Activated naive CD8-positive, alpha-beta T cell treated with anti-CD3 and anti-CD28 coated beads, Interleukin-2, amount 10 ng/mL, durations not matched to agents 7 days and 5 days (primary cell): ENCODE measurements at regions of chr2 and their contacts with region 1.

Region 1: GRCh38 chr2:8681786-8682692 is at the start of gene ID2:
- DNase-seq: peak; percentile 100
- ATAC-seq: peak; percentile 69
- H3K4me3 Mint-ChIP-seq: peak within 1 kb of the TSS; percentile 99
- H3K27ac Mint-ChIP-seq: peak within 1 kb of the TSS; percentile 98
- H3K4me1 Mint-ChIP-seq: peaks cover 34% of the 10 kb centered on the region
- H3K27me3 Mint-ChIP-seq: peaks cover 12% of the 10 kb centered on the region
- total RNA-seq, gene ID2: 167 to 172 TPM

Region 2: GRCh38 chr2:7427293-7428060 is 1254.6 kb before region 1 on chr2:
- POLR2A ChIA-PET with region 1: interaction called, 20 read pairs
- DNase-seq: no peak
- ATAC-seq: no peak
- H3K4me3 Mint-ChIP-seq: peak overlapping the region; percentile 34
- H3K27ac Mint-ChIP-seq: peak overlapping the region; percentile 70
- H3K4me1 Mint-ChIP-seq: peaks cover 40% of the 10 kb centered on the region
- H3K27me3 Mint-ChIP-seq: no peaks in the 10 kb centered on the region

Region 3: GRCh38 chr2:7725171-7725849 is 956.7 kb before region 1 on chr2:
- POLR2A ChIA-PET with region 1: interaction called, 98 read pairs
- DNase-seq: no peak
- ATAC-seq: peak; percentile 88
- H3K4me3 Mint-ChIP-seq: peak overlapping the region; percentile 95
- H3K27ac Mint-ChIP-seq: peak overlapping the region; percentile 92
- H3K4me1 Mint-ChIP-seq: peaks cover 40% of the 10 kb centered on the region
- H3K27me3 Mint-ChIP-seq: no peaks in the 10 kb centered on the region

Region 4: GRCh38 chr2:8337321-8337720 is 344.7 kb before region 1 on chr2:
- POLR2A ChIA-PET with region 1: interaction called, 11 read pairs
- DNase-seq: no peak
- ATAC-seq: peak; percentile 100
- H3K4me3 Mint-ChIP-seq: peak overlapping the region; percentile 67
- H3K27ac Mint-ChIP-seq: peak overlapping the region; percentile 81
- H3K4me1 Mint-ChIP-seq: peaks cover 16% of the 10 kb centered on the region
- H3K27me3 Mint-ChIP-seq: peaks cover 2% of the 10 kb centered on the region

Region 5: DNA sequence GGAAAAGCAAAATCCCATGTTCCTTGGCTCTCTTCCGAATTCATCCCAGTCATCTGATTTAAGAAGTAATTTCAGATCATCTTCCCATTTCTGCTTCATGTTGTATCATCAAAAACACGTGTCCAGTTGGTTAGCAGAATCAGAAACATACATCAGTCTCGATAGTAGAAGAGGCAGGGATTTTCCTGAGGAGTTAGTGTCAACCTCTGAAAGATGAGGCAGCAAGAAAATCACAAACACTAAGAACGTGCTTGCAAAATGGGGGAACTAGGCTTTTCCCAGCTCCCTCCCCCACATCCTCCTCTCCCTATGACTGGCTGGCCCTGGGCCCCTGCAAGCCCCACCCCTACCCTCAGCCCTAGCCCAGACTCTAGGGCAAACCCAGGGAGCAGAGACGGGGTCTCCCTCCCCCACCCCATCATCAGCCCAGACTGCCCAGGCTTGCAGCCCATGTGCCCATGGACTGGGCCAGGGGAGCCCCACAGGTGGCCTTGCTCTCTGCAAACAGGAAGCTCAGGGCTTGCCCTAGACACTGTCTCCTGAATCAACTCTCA is 161.2 kb before region 1 on chr2:
- POLR2A ChIA-PET with region 1: interaction called, 27 read pairs
- DNase-seq: no peak
- ATAC-seq: peak; percentile 32
- H3K4me3 Mint-ChIP-seq: no peak overlapping the region
- H3K27ac Mint-ChIP-seq: peak overlapping the region; percentile 19
- H3K4me1 Mint-ChIP-seq: peaks cover 71% of the 10 kb centered on the region
- H3K27me3 Mint-ChIP-seq: no peaks in the 10 kb centered on the region

Region 6: DNA sequence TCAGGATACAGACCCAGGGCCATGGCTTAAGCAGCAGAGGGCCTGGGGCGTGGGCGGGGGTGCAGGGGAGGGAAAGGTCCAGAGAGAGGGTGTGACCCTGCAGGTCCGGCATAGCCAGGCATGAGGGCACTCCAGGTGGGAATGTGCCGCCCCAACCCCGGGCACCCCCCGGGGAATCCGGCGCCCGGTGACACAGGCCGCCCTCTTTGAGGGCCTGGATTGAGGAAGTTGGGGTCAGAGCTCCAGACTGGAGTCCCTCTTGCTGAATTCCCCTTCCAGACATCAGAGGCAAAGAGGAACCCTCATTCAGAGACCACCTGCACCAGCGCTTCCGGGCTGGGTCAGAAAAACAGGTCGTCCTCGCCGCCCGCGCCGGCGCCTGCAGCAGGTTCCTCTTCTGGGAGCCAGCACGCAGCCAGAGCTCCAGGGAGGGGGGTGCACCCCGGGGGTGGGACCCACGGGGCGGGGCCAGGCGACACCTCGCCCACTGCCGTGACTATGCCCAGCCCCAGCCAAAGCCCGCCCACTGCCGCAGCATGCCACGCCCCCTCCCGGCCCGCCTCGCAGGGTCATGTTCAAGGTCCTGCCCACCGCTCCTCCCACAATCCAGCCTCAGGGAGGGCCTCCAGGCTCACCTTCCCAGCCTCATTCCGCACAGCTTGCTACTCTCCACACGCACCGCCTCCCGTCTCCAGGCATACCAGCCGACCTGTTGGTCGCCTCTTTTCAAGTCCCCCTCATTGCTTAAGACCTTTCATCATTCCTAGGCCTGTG is 98.5 kb before region 1 on chr2:
- POLR2A ChIA-PET with region 1: interaction called, 80 read pairs
- DNase-seq: peak; percentile 95
- ATAC-seq: peak; percentile 84
- H3K4me3 Mint-ChIP-seq: peak overlapping the region; percentile 72
- H3K27ac Mint-ChIP-seq: peak overlapping the region; percentile 81
- H3K4me1 Mint-ChIP-seq: peaks cover 46% of the 10 kb centered on the region
- H3K27me3 Mint-ChIP-seq: peaks cover 5% of the 10 kb centered on the region

Region 7: GRCh38 chr2:8737571-8738175 is 55.6 kb after region 1 on chr2:
- POLR2A ChIA-PET with region 1: no interaction called
- DNase-seq: no peak
- ATAC-seq: no peak
- H3K4me3 Mint-ChIP-seq: no peak overlapping the region
- H3K27ac Mint-ChIP-seq: no peak overlapping the region
- H3K4me1 Mint-ChIP-seq: no peaks in the 10 kb centered on the region
- H3K27me3 Mint-ChIP-seq: no peaks in the 10 kb centered on the region

Region 8: DNA sequence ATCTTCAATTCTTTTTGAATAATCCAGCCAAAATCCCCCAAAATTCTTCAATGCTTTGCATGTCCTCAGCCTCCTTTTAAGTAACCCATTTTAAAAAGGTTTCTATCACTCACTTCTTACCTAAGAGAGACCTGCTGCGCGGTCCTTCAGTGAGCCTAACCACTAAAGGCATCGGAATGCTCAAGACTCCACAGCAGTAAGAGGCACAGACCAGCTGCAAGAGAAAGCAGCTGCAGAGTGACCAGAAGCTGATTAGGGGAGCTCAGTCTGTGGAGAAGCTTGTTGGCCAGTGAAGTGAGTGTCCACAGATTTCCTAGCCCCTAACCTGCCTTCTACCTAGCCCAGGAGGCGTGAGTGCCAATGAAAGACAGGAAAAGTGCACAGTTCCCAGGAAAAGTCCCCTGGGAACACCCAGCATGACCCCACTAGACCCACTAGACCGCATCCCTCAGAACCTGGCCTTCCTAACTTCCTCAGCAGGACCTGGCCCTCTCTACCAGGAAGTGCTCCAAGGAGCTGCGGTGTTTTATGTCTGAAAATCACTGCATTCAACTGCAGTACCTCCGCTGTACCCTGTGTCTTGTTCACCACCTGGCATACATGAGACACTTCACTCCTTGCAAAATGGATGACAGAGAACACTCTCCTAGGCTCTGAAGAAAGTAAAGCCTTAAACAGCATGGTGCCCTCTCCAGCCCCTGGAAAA is 311.3 kb after region 1 on chr2:
- POLR2A ChIA-PET with region 1: no interaction called
- DNase-seq: no peak
- ATAC-seq: no peak
- H3K4me3 Mint-ChIP-seq: no peak overlapping the region
- H3K27ac Mint-ChIP-seq: no peak overlapping the region
- H3K4me1 Mint-ChIP-seq: no peaks in the 10 kb centered on the region
- H3K27me3 Mint-ChIP-seq: peaks cover 28% of the 10 kb centered on the region